GM10248 (cell line): ENCODE measurements at regions of chr13 and their contacts with region 1.

Region 1: DNA sequence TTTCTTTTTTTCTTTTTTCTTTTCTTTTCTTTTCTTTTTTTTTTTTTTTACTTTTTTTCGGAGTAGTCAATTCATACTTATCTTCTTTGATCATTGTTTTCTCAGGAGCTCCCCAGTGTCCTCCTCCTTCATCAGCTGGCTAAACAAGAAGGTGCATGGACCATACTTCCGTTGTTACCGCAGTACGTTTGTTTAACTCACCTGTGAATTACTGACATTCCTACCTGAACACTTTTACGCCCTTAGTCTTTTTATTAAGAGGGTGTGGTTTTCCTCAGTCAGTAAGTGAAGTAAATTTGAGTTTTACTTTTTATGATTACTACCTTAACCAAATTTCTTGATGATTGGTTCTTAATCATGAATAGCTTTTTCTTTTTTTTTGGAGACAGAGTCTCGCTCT is 47.1 kb downstream of the B3GLCT start:
- DNase-seq: no peak
- CTCF ChIP-seq: no peak

Region 2: GRCh38 chr13:31105020-31105795 is 141.7 kb before region 1 on chr13:
- CTCF ChIA-PET with region 1: no interaction called
- POLR2A ChIA-PET with region 1: no interaction called
- DNase-seq: no peak
- CTCF ChIP-seq: no peak

Region 3: GRCh38 chr13:31236211-31236786 is 10.6 kb before region 1 on chr13:
- CTCF ChIA-PET with region 1: interaction called, 14 read pairs
- POLR2A ChIA-PET with region 1: no interaction called
- DNase-seq: peak; percentile 28
- CTCF ChIP-seq: peak; percentile 55

Region 4: DNA sequence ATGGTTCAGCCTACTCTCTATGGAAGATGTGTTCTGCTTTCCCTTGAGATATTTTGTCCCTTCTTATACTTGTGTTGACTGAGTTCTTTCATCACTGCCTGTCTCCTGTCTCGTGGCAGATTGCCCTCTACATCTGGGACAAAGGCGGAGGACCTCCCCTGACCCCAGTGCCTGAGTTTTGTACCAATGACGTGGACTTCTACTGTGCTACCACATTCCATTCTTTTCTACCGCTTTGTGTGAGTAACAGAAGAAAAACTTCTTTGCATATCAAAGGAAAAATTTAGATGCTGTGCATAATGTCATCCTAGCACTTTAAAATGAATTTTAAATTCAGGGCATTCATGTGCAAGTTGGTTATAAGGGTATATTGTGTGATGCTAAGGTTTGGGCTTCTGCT is 27.5 kb after region 1 on chr13:
- CTCF ChIA-PET with region 1: no interaction called
- POLR2A ChIA-PET with region 1: no interaction called
- DNase-seq: no peak
- CTCF ChIP-seq: no peak